ENCODE measurements at regions of chrX and their contacts with region 1.

Region 1: GRCh38 chrX:149903889-149904748 is 23.1 kb downstream of the MAGEA8 start:
- DNase-seq: no peak
- ATAC-seq: peak; percentile 80
- H3K4me3 Mint-ChIP-seq: peak overlapping the region; percentile 44
- H3K27ac Mint-ChIP-seq: peak overlapping the region; percentile 55
- H3K4me1 Mint-ChIP-seq: peaks cover 12% of the 10 kb centered on the region
- H3K27me3 Mint-ChIP-seq: peaks cover 4% of the 10 kb centered on the region
- CTCF ChIP-seq: no peak

Region 2: DNA sequence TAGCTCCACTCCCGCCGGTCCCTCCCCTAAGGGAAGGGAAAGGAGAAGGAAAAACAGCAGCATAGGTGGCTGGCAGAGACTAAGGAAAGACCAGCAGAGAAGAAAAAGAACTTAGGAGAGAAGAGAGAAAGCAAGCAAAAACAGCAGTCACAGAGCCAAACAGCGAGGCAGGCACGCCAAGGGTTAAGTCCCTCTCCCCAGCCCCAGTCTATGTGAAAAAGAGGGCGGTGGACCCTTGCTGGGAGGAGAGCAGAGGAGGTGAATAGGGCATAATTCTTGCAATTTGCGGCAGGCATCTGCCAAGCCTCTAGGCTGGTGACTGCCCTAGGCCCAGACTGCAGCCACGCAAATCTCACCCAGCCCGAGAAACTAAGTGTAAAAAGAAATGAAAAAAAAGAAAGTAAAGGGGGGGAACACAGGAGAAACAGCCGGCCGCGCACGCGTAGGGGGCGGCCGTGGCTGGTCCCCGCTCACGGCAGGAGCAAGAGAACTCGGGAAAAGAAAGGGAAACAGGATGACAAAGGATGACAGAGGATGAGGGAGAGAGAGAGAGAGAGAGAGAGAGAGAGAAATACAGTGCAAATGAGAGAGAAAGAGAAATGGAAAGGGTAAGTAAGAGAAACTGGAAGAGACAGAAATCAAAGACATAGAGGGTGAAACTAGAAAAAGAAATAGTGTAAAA is 73.8 kb before region 1 on chrX:
- CTCF ChIA-PET with region 1: no interaction called
- POLR2A ChIA-PET with region 1: no interaction called
- intact Hi-C with region 1: loop called (anchors 10 kb)
- DNase-seq: peak; percentile 55
- ATAC-seq: peak; percentile 85
- H3K4me3 Mint-ChIP-seq: peak overlapping the region; percentile 71
- H3K27ac Mint-ChIP-seq: peak overlapping the region; percentile 92
- H3K4me1 Mint-ChIP-seq: peaks cover 32% of the 10 kb centered on the region
- H3K27me3 Mint-ChIP-seq: no peaks in the 10 kb centered on the region
- CTCF ChIP-seq: no peak

Region 3: GRCh38 chrX:149987613-149988012 is 83.5 kb after region 1 on chrX:
- CTCF ChIA-PET with region 1: no interaction called
- POLR2A ChIA-PET with region 1: no interaction called
- intact Hi-C with region 1: no loop called
- DNase-seq: no peak
- ATAC-seq: no peak
- H3K4me3 Mint-ChIP-seq: no peak overlapping the region
- H3K27ac Mint-ChIP-seq: no peak overlapping the region
- H3K4me1 Mint-ChIP-seq: no peaks in the 10 kb centered on the region
- H3K27me3 Mint-ChIP-seq: no peaks in the 10 kb centered on the region
- CTCF ChIP-seq: no peak

Measured in activated CD8-positive, alpha-beta T cell treated with anti-CD3 and anti-CD28 coated beads for 36 hours (primary cell).